ENCODE measurements at regions of chr9 and their contacts with region 1.

Region 1: GRCh38 chr9:3817208-3817607 is 291.4 kb upstream of the RFX3 start:
- DNase-seq: no peak
- ATAC-seq: no peak
- H3K4me3 Mint-ChIP-seq: no peak overlapping the region
- H3K27ac Mint-ChIP-seq: no peak overlapping the region
- H3K4me1 Mint-ChIP-seq: no peaks in the 10 kb centered on the region
- H3K27me3 Mint-ChIP-seq: peaks cover 13% of the 10 kb centered on the region

Region 2: GRCh38 chr9:2276296-2276695 is 1540.9 kb before region 1 on chr9:
- CTCF ChIA-PET with region 1: no interaction called
- POLR2A ChIA-PET with region 1: no interaction called
- intact Hi-C with region 1: loop called in 1 of 2 experiments (anchors 5 kb)
- DNase-seq: no peak
- ATAC-seq: no peak
- H3K4me3 Mint-ChIP-seq: no peak overlapping the region
- H3K27ac Mint-ChIP-seq: no peak overlapping the region
- H3K4me1 Mint-ChIP-seq: peaks cover 1% of the 10 kb centered on the region
- H3K27me3 Mint-ChIP-seq: peaks cover 1% of the 10 kb centered on the region

Measured in activated CD4-positive, alpha-beta T cell treated with anti-CD3 and anti-CD28 coated beads for 36 hours (primary cell).